Left colon (tissue), 2 donors: ENCODE measurements at regions of chr11 and their contacts with region 1.

Region 1: DNA sequence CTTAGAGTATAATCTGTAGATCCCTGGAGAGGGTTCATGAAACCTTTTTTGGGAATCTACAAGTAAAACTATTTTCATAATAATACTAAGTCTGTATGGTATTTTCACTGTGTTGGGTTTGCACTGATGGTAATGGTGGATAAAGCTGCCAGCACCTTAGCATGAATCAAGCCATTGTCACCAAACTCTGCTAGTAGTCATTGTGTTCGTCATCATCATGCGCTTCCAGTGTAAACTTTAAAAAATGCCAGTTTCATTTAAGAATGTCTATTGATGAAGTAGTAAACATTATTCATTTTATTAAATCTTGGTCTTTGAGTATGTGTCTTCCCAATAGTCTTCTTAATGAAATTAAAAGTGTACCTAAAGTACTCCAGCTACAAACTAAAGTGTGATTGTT is 15.0 kb downstream of the ALKBH3 start:
- DNase-seq: no peak
- ATAC-seq: no peak

Region 2: DNA sequence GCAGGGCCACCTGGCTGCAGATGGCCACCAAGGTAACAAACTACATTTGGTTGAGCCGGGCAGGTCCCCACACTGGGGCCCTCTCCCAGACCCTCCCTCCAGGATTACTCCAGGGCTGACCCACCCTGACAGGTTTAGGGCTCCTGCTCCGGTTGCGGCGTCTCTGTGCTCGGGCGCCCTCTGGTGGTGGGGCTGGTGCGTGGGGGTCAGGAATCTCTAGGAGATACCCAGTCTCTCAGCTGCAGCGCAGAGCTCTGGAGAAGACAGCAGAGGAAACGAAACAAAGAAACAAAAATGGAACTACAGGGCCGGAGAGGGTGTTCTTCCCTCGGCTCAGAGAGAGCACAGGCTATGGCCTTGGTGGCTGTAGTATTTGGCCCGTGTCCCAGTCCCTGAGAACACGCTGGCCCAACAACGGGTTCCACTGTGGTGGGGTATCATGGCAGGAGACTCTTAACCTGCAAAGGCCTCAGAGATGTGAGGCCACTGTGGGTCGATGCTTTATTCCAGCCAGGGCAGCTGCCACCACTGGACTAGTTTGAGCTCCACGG is 49.2 kb after region 1 on chr11:
- intact Hi-C with region 1: loop called in 1 of 2 experiments (anchors 10 kb)
- DNase-seq: peak; percentile 55 to 83
- ATAC-seq: peak; percentile 71

Region 3: GRCh38 chr11:44036811-44037657 is 141.4 kb after region 1 on chr11:
- intact Hi-C with region 1: loop called in 1 of 2 experiments (anchors 5 kb)
- DNase-seq: peak; percentile 54 to 55
- ATAC-seq: peak; percentile 81